HepG2 (cell line): ENCODE measurements at regions of chr17 and their contacts with region 1.

Region 1: DNA sequence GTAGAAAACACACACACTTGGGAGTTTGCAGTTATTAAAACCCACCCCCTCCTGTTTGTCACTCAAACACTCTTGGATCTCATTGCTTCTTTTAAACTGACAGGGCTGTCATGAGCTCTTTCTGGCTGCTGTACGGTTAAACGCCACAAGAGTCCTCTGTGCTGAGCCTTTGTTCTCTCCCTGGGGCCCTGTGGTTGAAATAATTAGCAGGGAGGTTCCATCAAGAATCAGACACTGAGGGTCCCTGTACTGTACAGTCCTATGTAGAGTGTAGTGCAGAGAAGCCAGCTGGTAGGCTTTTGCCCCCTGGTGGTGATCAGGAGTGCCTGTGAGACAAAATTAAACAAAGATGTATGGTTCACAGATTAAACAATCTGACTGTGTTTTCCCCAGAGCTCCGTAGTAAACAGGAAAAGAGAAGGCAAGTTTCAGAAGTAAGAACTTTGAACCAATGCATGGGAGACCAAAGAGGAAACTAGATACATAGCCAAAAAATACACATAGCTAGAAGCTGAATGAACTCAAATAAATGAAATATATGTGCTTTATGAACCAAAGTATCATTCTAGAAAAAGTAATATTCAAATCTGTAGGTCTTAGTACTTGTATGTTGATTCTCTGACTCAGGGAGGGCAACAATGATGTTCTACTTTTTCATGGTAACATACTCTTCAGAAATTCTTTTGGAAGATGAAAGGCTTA is 1.4 kb upstream of the SSH2 start:
- DNase-seq: peak; percentile 90
- ATAC-seq: peak; percentile 82
- H3K4me3 ChIP-seq: peak overlapping the region; percentile 81 to 98 (median 86)
- H3K27ac ChIP-seq: peak overlapping the region; percentile 76
- H3K4me1 ChIP-seq: peaks cover 47% of the 10 kb centered on the region
- H3K27me3 ChIP-seq: no peaks in the 10 kb centered on the region; a peak in 1 of 5 replicates
- CTCF ChIP-seq: peak; percentile 88
- EP300 ChIP-seq: no peak
- POLR2A ChIP-seq: no peak
- RAD21 ChIP-seq: peak; percentile 81

Region 2: GRCh38 chr17:29633886-29634285 is 297.5 kb before region 1 on chr17:
- CTCF ChIA-PET with region 1: no interaction called
- POLR2A ChIA-PET with region 1: interaction called, 5 read pairs
- in situ Hi-C with region 1: loop called (anchors 10 kb)
- intact Hi-C with region 1: loop called (anchors 1 kb)
- DNase-seq: no peak
- ATAC-seq: no peak
- H3K4me3 ChIP-seq: no peak overlapping the region
- H3K27ac ChIP-seq: no peak overlapping the region
- H3K4me1 ChIP-seq: peaks cover under 1% of the 10 kb centered on the region; the same call in 1 of the 2 replicates
- H3K27me3 ChIP-seq: no peaks in the 10 kb centered on the region
- CTCF ChIP-seq: no peak
- EP300 ChIP-seq: no peak
- POLR2A ChIP-seq: no peak
- RAD21 ChIP-seq: no peak

Region 3: DNA sequence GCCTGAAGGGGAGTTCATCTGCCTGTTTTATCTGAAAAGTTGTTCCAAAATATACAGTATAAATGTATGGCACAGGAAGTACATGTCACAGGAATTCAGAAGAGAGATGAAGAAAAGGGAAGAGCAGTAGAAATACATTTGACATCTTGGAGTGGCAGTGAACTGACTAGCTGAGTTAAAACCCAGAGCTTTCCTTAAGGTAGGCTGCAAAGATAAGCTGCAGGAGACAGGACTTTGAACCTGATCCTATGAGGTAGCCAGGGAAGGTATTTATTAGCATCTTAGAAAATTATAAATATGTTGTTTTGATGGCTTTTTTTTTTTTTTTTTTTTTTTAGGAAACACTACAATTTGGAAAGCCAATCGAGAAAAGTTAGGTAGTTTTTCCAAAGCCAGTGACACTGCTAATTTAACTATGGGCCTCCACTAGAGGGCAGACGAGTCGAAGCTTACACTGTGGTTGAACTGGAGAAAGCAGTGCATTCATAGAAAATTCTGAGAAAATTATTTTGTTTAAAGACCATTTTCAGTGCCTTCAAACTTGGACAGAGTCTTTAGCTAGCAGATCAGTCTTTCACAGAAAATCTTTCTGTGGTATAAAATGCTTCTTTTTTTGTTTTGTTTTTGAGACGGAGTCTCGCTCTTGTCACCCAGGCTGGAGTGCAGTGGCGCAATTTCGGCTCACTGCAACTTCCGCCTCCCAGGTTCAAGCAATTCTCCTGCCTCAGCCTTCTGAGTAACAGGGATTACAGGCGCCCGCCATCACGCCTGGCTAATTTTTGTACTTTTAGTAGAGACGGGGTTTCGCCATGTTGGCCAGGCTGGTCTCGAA is 123.6 kb before region 1 on chr17:
- CTCF ChIA-PET with region 1: interaction called, 31 read pairs
- POLR2A ChIA-PET with region 1: interaction called, 5 read pairs
- in situ Hi-C with region 1: loop called (anchors 5 kb)
- intact Hi-C with region 1: loop called (anchors 1 kb)
- DNase-seq: peak; percentile 57
- ATAC-seq: peak; percentile 67
- H3K4me3 ChIP-seq: no peak overlapping the region
- H3K27ac ChIP-seq: no peak overlapping the region
- H3K4me1 ChIP-seq: no peaks in the 10 kb centered on the region
- H3K27me3 ChIP-seq: no peaks in the 10 kb centered on the region
- CTCF ChIP-seq: peak; percentile 71
- EP300 ChIP-seq: no peak
- POLR2A ChIP-seq: no peak
- RAD21 ChIP-seq: peak; percentile 56

Region 4: DNA sequence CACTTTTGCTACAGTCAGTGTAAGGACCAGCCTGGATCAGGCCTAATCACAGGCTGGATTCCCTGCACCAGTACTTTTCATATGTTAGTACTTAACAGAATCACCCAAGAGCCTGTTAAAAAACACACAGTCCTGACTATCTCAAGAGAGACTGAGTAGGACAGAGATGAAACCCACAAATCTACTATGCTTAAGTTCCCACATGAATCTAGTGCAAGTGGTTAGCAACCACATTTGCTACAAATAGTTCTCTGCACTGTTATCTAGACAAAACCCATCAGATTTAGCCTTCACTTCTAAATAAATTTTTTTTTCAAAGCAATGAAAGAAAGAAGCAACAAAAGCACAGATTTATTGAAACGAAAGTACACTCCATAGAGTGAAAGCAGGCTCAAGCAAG is 40.3 kb before region 1 on chr17:
- CTCF ChIA-PET with region 1: no interaction called
- POLR2A ChIA-PET with region 1: no interaction called
- in situ Hi-C with region 1: no loop called
- intact Hi-C with region 1: loop called (anchors 5 kb)
- DNase-seq: no peak
- ATAC-seq: no peak
- H3K4me3 ChIP-seq: no peak overlapping the region
- H3K27ac ChIP-seq: no peak overlapping the region
- H3K4me1 ChIP-seq: peaks cover 9% of the 10 kb centered on the region
- H3K27me3 ChIP-seq: no peaks in the 10 kb centered on the region
- CTCF ChIP-seq: no peak
- EP300 ChIP-seq: no peak
- POLR2A ChIP-seq: no peak
- RAD21 ChIP-seq: no peak

Region 5: DNA sequence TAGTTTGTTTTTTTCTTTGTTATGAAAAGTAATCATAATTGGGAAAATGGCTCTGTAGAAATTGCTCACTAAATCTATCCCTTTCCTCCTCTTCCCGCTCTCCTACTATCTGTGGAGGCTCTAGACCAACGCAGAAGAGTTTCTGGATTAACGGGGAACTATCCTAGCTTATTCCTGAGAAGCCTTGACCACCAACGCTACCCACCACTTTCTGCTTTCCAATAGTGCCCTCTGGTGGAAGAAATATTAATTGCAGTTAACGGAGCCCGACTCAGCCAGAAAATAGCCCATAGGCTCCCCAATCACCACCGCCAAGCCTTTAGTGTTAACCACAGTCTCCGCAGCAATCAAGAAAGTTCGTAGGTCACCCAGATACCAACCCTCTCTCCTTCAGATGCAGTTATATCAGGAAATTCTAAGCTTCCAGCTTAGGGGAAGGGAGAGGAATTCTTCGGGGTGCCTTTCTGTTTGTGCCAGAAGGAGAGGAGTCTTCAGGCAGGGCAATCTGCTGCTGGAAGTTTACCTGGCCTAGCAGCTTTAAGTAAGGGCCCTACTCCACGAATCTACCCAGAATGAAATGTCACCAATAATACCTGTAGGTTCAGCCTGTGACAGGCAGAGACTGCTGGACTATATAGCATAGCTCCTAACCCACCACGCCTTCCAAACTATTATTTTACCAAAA is 162.2 kb after region 1 on chr17:
- CTCF ChIA-PET with region 1: no interaction called
- POLR2A ChIA-PET with region 1: no interaction called
- in situ Hi-C with region 1: no loop called
- intact Hi-C with region 1: loop called (anchors 10 kb)
- DNase-seq: peak; percentile 49
- ATAC-seq: peak; percentile 83
- H3K4me3 ChIP-seq: no peak overlapping the region
- H3K27ac ChIP-seq: no peak overlapping the region
- H3K4me1 ChIP-seq: peaks cover 10% of the 10 kb centered on the region
- H3K27me3 ChIP-seq: peaks cover 0 to 23% of the 10 kb centered on the region in 2 experiments; a peak in 2 of 5 replicates
- CTCF ChIP-seq: peak; percentile 83
- EP300 ChIP-seq: no peak
- POLR2A ChIP-seq: no peak
- RAD21 ChIP-seq: peak; percentile 76